ENCODE measurements at regions of chr19 and their contacts with region 1.

Region 1: GRCh38 chr19:19304186-19304965 is 15.9 kb downstream of the SUGP1 start:
- DNase-seq: no peak
- H3K4me3 ChIP-seq: no peak overlapping the region
- H3K27ac ChIP-seq: no peak overlapping the region
- H3K4me1 ChIP-seq: no peaks in the 10 kb centered on the region
- H3K27me3 ChIP-seq: no peaks in the 10 kb centered on the region
- CTCF ChIP-seq: no peak
- EP300 ChIP-seq: no peak
- POLR2A ChIP-seq: no peak
- RAD21 ChIP-seq: no peak

Region 2: DNA sequence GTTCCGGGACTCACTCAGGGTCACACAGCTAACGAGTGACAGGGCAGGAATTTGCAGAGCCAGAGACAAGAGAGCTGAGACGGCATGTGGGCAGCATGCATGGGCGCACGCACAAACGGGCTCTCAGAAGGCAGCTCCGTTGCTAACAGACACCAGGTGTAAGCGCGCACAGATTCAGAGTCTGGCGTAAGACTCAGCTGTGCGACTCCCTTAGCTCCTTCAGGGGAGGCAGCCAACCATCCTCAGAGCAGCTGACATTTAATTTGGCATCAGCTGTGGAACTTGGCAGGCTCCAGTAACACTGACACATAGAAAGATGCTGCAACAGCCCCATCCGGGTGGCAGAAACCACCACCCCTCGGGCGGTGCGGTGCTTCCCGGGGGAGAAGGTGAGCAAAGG is 23.8 kb before region 1 on chr19:
- CTCF ChIA-PET with region 1: interaction called, 5 read pairs
- POLR2A ChIA-PET with region 1: interaction called, 11 read pairs
- DNase-seq: no peak
- H3K4me3 ChIP-seq: no peak overlapping the region
- H3K27ac ChIP-seq: no peak overlapping the region
- H3K4me1 ChIP-seq: no peaks in the 10 kb centered on the region
- H3K27me3 ChIP-seq: no peaks in the 10 kb centered on the region
- CTCF ChIP-seq: no peak
- EP300 ChIP-seq: no peak
- POLR2A ChIP-seq: no peak
- RAD21 ChIP-seq: no peak

Region 3: DNA sequence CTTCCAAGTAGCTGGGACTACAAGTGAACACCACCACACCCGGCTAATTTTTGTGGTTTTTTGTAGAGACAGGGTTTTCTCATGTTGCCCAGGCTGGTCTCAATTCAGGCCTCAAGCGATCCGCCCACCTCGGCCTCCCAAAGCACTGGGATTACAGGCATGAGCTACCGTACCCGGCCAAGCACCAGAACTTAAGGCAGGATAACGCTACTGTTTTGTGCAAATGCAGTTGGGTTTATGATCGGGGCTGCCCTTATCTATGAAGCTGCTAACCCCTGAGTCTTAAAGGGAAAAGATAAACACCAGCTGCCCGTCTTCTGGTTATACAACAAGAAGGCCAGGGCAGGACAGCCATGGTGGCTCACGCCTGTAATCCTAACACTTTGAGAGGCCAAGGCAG is 18.7 kb before region 1 on chr19:
- CTCF ChIA-PET with region 1: interaction called, 11 read pairs
- POLR2A ChIA-PET with region 1: interaction called, 13 read pairs
- DNase-seq: no peak
- H3K4me3 ChIP-seq: no peak overlapping the region
- H3K27ac ChIP-seq: no peak overlapping the region
- H3K4me1 ChIP-seq: no peaks in the 10 kb centered on the region
- H3K27me3 ChIP-seq: no peaks in the 10 kb centered on the region
- CTCF ChIP-seq: no peak
- EP300 ChIP-seq: no peak
- POLR2A ChIP-seq: no peak
- RAD21 ChIP-seq: no peak

Region 4: DNA sequence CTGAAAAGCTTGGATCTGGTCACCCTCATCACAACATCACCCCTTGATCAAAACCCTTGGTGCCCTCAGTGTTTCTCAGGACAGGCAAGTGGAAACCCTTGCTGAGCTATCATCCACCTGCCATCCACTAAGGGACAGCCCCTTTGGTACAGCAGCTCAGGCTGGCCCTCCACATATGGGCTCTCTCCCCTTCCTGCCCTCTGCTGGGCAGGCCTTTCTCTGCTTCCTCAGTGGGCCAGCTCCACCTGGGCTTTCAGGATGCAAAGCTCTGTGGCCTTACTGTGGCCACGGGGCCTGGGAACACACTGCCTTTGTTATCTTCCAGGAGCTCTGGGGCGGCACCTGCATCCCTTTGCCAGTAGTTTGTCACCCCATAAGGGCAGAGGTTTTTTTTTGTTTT is 11.1 kb after region 1 on chr19:
- CTCF ChIA-PET with region 1: interaction called, 11 read pairs
- POLR2A ChIA-PET with region 1: interaction called, 5 read pairs
- DNase-seq: no peak
- H3K4me3 ChIP-seq: no peak overlapping the region
- H3K27ac ChIP-seq: no peak overlapping the region
- H3K4me1 ChIP-seq: peaks cover 0 to 4% (median 1%) of the 10 kb centered on the region in 4 experiments; a peak in 1 of 7 replicates
- H3K27me3 ChIP-seq: no peaks in the 10 kb centered on the region
- CTCF ChIP-seq: peak; percentile 24 to 32 (median 29)
- EP300 ChIP-seq: no peak
- POLR2A ChIP-seq: no peak
- RAD21 ChIP-seq: peak in 1 of 2 experiments; percentile 18; a peak in 1 of 4 replicates

Region 5: GRCh38 chr19:19374962-19375823 is 70.8 kb after region 1 on chr19:
- CTCF ChIA-PET with region 1: no interaction called
- POLR2A ChIA-PET with region 1: no interaction called
- DNase-seq: no peak
- H3K4me3 ChIP-seq: no peak overlapping the region
- H3K27ac ChIP-seq: no peak overlapping the region
- H3K4me1 ChIP-seq: peaks cover 0 to 6% (median 4%) of the 10 kb centered on the region in 4 experiments; a peak in 5 of 7 replicates
- H3K27me3 ChIP-seq: no peaks in the 10 kb centered on the region
- CTCF ChIP-seq: no peak
- EP300 ChIP-seq: no peak
- POLR2A ChIP-seq: no peak
- RAD21 ChIP-seq: no peak

Measured in H1 (cell line).